ENCODE measurements at regions of chr1 and their contacts with region 1.

Region 1: DNA sequence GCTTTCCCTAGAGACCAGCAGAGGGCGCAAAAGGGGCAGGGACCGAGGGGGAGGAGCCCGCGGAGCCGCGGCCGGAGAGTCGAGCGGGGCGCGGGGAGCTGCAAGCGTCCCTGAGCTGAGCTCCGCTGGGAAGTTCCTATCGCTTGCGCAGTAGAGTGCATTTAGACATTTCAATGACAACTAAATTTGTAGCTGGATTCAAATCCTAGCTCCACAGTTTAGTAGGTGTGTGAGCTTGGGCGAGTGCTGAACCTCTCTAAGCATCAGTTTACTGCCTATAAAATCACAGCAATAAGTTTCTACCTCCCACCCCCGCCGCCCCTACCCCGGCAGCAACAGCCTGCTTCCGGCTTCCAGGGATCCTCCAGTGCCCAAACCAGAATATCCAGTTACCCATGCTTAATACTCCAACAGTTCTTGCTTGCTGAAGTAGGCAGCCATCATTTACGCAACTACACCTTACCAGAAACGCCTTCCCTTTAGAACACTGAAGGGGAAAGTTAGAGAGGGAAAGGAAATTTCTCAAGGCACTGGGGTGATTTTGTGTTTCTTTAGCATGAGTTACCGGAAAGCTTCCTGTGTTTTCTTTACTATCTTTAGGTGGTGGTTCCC is 9.1 kb downstream of the TLR5 start:
- DNase-seq: peak; percentile 94
- H3K4me3 Mint-ChIP-seq: peak overlapping the region; percentile 63
- H3K27ac Mint-ChIP-seq: no peak overlapping the region
- H3K4me1 Mint-ChIP-seq: peaks cover 45% of the 10 kb centered on the region
- H3K27me3 Mint-ChIP-seq: peaks cover 9% of the 10 kb centered on the region
- CTCF ChIP-seq: no peak

Region 2: GRCh38 chr1:221440658-221441057 is 1693.3 kb before region 1 on chr1:
- CTCF ChIA-PET with region 1: no interaction called
- POLR2A ChIA-PET with region 1: no interaction called
- intact Hi-C with region 1: no loop called
- DNase-seq: no peak
- H3K4me3 Mint-ChIP-seq: peak overlapping the region; percentile 26
- H3K27ac Mint-ChIP-seq: peak overlapping the region; percentile 91
- H3K4me1 Mint-ChIP-seq: peaks cover 36% of the 10 kb centered on the region
- H3K27me3 Mint-ChIP-seq: no peaks in the 10 kb centered on the region
- CTCF ChIP-seq: no peak

Region 3: GRCh38 chr1:223114871-223115270 is 19.1 kb before region 1 on chr1:
- CTCF ChIA-PET with region 1: interaction called, 29 read pairs
- POLR2A ChIA-PET with region 1: no interaction called
- intact Hi-C with region 1: no loop called
- DNase-seq: no peak
- H3K4me3 Mint-ChIP-seq: no peak overlapping the region
- H3K27ac Mint-ChIP-seq: no peak overlapping the region
- H3K4me1 Mint-ChIP-seq: peaks cover 3% of the 10 kb centered on the region
- H3K27me3 Mint-ChIP-seq: no peaks in the 10 kb centered on the region
- CTCF ChIP-seq: no peak

Region 4: DNA sequence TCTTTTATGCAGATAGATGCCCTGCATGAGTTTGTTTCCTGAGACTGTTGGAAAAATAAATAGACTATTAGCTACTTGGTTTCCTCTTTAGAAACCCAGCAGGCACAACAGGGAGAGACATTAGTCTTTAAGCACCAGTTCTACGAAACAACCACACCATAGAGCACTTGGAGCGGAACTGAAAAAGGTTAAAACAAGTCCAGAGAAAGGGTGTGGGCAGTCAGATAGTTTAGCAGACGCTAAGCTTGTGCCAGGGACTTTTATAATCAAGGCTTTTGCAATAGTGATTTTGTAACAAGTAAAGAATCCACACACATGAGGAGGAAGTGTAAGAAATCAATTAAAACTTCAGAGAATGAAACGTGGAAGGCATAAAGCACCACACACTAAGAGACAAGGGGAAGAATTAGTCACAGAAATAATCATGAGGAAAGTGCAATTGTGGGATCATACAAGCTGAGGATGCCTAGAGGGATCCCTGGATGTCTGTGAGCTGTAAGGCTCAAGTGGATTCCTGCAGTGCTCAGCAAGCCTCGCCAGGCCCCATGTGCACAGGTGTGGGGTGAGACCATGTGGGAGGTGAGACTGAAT is 46.9 kb after region 1 on chr1:
- CTCF ChIA-PET with region 1: interaction called, 33 read pairs
- POLR2A ChIA-PET with region 1: interaction called, 12 read pairs
- intact Hi-C with region 1: loop called (anchors 2 kb)
- DNase-seq: peak; percentile 92
- H3K4me3 Mint-ChIP-seq: no peak overlapping the region
- H3K27ac Mint-ChIP-seq: peak overlapping the region; percentile 9
- H3K4me1 Mint-ChIP-seq: peaks cover 33% of the 10 kb centered on the region
- H3K27me3 Mint-ChIP-seq: no peaks in the 10 kb centered on the region
- CTCF ChIP-seq: no peak

Region 5: GRCh38 chr1:223273511-223273910 is 139.6 kb after region 1 on chr1:
- CTCF ChIA-PET with region 1: interaction called, 11 read pairs
- POLR2A ChIA-PET with region 1: no interaction called
- intact Hi-C with region 1: no loop called
- DNase-seq: no peak
- H3K4me3 Mint-ChIP-seq: no peak overlapping the region
- H3K27ac Mint-ChIP-seq: no peak overlapping the region
- H3K4me1 Mint-ChIP-seq: no peaks in the 10 kb centered on the region
- H3K27me3 Mint-ChIP-seq: no peaks in the 10 kb centered on the region
- CTCF ChIP-seq: no peak

Region 6: GRCh38 chr1:223411309-223411708 is 277.4 kb after region 1 on chr1:
- CTCF ChIA-PET with region 1: interaction called, 11 read pairs
- POLR2A ChIA-PET with region 1: interaction called, 3 read pairs
- intact Hi-C with region 1: no loop called
- DNase-seq: no peak
- H3K4me3 Mint-ChIP-seq: no peak overlapping the region
- H3K27ac Mint-ChIP-seq: no peak overlapping the region
- H3K4me1 Mint-ChIP-seq: no peaks in the 10 kb centered on the region
- H3K27me3 Mint-ChIP-seq: no peaks in the 10 kb centered on the region
- CTCF ChIP-seq: no peak

Region 7: GRCh38 chr1:223621312-223621734 is 487.4 kb after region 1 on chr1:
- CTCF ChIA-PET with region 1: interaction called, 21 read pairs
- POLR2A ChIA-PET with region 1: interaction called, 7 read pairs
- intact Hi-C with region 1: no loop called
- DNase-seq: no peak
- H3K4me3 Mint-ChIP-seq: no peak overlapping the region
- H3K27ac Mint-ChIP-seq: no peak overlapping the region
- H3K4me1 Mint-ChIP-seq: no peaks in the 10 kb centered on the region
- H3K27me3 Mint-ChIP-seq: no peaks in the 10 kb centered on the region
- CTCF ChIP-seq: no peak